CD8-positive, alpha-beta T cell (primary cell): ENCODE measurements at regions of chr12 and their contacts with region 1.

Region 1: GRCh38 chr12:39628836-39629235 is 9.2 kb upstream of the ABCD2 start:
- DNase-seq: peak in 2 of 9 experiments; percentile 42 to 64
- ATAC-seq: peak; percentile 74
- H3K4me3 ChIP-seq: no peak overlapping the region
- H3K4me3 Mint-ChIP-seq: peak overlapping the region; percentile 52
- H3K27ac ChIP-seq: peak overlapping the region in 1 of 2 experiments; percentile 64
- H3K27ac Mint-ChIP-seq: peak overlapping the region; percentile 88
- H3K4me1 ChIP-seq: peaks cover 41% of the 10 kb centered on the region
- H3K4me1 Mint-ChIP-seq: peaks cover 52% of the 10 kb centered on the region
- H3K27me3 ChIP-seq: no peaks in the 10 kb centered on the region
- H3K27me3 Mint-ChIP-seq: no peaks in the 10 kb centered on the region
- CTCF ChIP-seq: no peak

Region 2: GRCh38 chr12:39467432-39467870 is 161.4 kb before region 1 on chr12:
- CTCF ChIA-PET with region 1: no interaction called
- POLR2A ChIA-PET with region 1: no interaction called
- intact Hi-C with region 1: no loop called
- DNase-seq: peak in 2 of 9 experiments; percentile 11 to 39
- ATAC-seq: peak; percentile 61
- H3K4me3 ChIP-seq: peak overlapping the region in 1 of 2 experiments; percentile 19
- H3K4me3 Mint-ChIP-seq: peak overlapping the region; percentile 63
- H3K27ac ChIP-seq: peak overlapping the region in 1 of 2 experiments; percentile 76
- H3K27ac Mint-ChIP-seq: peak overlapping the region; percentile 83
- H3K4me1 ChIP-seq: peaks cover 12% of the 10 kb centered on the region
- H3K4me1 Mint-ChIP-seq: peaks cover 12% of the 10 kb centered on the region
- H3K27me3 ChIP-seq: no peaks in the 10 kb centered on the region
- H3K27me3 Mint-ChIP-seq: no peaks in the 10 kb centered on the region
- CTCF ChIP-seq: no peak

Region 3: DNA sequence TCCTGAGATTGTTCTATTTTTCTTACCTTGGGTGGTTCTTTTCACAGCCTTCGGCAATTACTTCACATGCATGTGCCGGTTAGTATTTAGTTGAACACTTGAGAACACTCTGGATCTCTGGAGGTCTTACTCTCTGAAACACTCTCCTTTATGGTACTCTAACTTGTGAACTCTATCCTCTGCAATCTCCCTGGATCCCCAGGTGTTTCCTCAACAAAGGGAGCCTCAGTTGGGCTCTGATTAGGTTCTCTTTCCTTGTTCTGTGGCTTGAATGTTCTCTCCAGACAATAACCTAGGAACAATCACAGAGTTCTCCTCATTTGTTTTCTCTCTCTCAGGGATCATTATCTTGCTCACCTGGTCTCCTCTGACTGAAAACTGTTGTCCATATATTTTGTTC is 31.3 kb after region 1 on chr12:
- CTCF ChIA-PET with region 1: no interaction called
- POLR2A ChIA-PET with region 1: no interaction called
- intact Hi-C with region 1: loop called in 1 of 2 experiments (anchors 5 kb)
- DNase-seq: no peak
- ATAC-seq: no peak
- H3K4me3 ChIP-seq: no peak overlapping the region
- H3K4me3 Mint-ChIP-seq: no peak overlapping the region
- H3K27ac ChIP-seq: no peak overlapping the region
- H3K27ac Mint-ChIP-seq: no peak overlapping the region
- H3K4me1 ChIP-seq: no peaks in the 10 kb centered on the region
- H3K4me1 Mint-ChIP-seq: no peaks in the 10 kb centered on the region
- H3K27me3 ChIP-seq: no peaks in the 10 kb centered on the region
- H3K27me3 Mint-ChIP-seq: no peaks in the 10 kb centered on the region
- CTCF ChIP-seq: no peak

Region 4: GRCh38 chr12:39824505-39825212 is 195.8 kb after region 1 on chr12:
- CTCF ChIA-PET with region 1: no interaction called
- POLR2A ChIA-PET with region 1: no interaction called
- intact Hi-C with region 1: no loop called
- DNase-seq: no peak
- ATAC-seq: no peak
- H3K4me3 ChIP-seq: no peak overlapping the region
- H3K4me3 Mint-ChIP-seq: no peak overlapping the region
- H3K27ac ChIP-seq: no peak overlapping the region
- H3K27ac Mint-ChIP-seq: no peak overlapping the region
- H3K4me1 ChIP-seq: no peaks in the 10 kb centered on the region
- H3K4me1 Mint-ChIP-seq: no peaks in the 10 kb centered on the region
- H3K27me3 ChIP-seq: no peaks in the 10 kb centered on the region
- H3K27me3 Mint-ChIP-seq: no peaks in the 10 kb centered on the region
- CTCF ChIP-seq: no peak